ENCODE measurements at regions of chr6 and their contacts with region 1.

Region 1: DNA sequence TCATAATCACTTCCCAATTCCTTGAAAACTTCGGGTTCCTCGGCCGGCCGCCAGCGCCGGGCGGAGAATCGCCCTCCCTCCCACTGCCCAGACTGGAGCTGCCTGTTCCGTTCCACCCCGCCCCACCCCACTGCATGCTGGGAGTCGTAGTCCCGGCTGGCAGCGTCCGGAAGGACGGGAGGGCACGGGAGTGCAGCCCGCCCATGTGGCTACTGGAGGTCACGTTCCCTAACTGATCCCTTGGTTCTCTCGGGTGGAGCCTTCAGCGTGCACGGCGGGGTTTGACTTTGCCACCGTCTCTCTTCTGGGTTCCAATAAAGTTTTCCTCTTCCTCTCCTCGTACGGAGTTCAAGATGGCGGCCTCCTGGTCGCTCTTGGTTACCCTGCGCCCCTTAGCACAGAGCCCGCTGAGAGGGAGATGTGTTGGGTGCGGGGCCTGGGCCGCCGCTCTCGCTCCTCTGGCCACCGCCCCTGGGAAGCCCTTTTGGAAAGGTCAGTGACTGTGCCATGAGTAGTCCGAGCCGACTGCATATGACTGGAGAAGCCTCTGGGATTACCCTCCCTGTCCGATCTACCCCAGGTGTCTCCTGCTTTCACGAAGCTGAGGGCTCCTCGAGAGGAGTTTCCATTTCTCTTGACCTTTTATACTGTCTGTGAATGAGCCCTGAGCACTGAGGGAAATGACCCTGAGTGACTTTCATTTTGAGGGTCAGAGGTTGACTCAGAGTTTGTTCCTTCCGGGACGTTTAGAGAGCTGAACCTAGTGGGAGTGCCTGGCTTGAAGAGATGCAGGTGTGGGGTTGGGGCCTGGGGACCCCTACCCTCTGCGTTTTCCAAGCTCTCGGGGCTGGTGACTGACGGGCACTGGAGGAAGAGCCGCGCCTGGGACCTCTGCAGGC is at the start of gene AFG1L:
- DNase-seq: peak; percentile 93
- H3K4me3 Mint-ChIP-seq: peak within 1 kb of the TSS; percentile 94
- H3K27ac Mint-ChIP-seq: peak within 1 kb of the TSS; percentile 99
- H3K4me1 Mint-ChIP-seq: peaks cover 10% of the 10 kb centered on the region
- H3K27me3 Mint-ChIP-seq: no peaks in the 10 kb centered on the region
- CTCF ChIP-seq: no peak
- total RNA-seq, gene AFG1L: 8.2 and 8.5 TPM in 2 replicates

Region 2: GRCh38 chr6:108260809-108261569 is 34.0 kb before region 1 on chr6 and contains the start of gene SNX3:
- CTCF ChIA-PET with region 1: interaction called, 6 read pairs
- POLR2A ChIA-PET with region 1: interaction called, 80 read pairs
- intact Hi-C with region 1: loop called (anchors 1 kb)
- DNase-seq: peak; percentile 96
- H3K4me3 Mint-ChIP-seq: peak within 1 kb of the TSS; percentile 93
- H3K27ac Mint-ChIP-seq: peak within 1 kb of the TSS; percentile 89
- H3K4me1 Mint-ChIP-seq: peaks cover 7% of the 10 kb centered on the region
- H3K27me3 Mint-ChIP-seq: no peaks in the 10 kb centered on the region
- CTCF ChIP-seq: no peak
- total RNA-seq, gene SNX3: 114 and 138 TPM in 2 replicates

Region 3: GRCh38 chr6:108309844-108310243 is 14.9 kb after region 1 on chr6:
- CTCF ChIA-PET with region 1: interaction called, 4 read pairs
- POLR2A ChIA-PET with region 1: interaction called, 30 read pairs
- intact Hi-C with region 1: no loop called
- DNase-seq: no peak
- H3K4me3 Mint-ChIP-seq: no peak overlapping the region
- H3K27ac Mint-ChIP-seq: no peak overlapping the region
- H3K4me1 Mint-ChIP-seq: peaks cover 6% of the 10 kb centered on the region
- H3K27me3 Mint-ChIP-seq: no peaks in the 10 kb centered on the region
- CTCF ChIP-seq: no peak

Region 4: GRCh38 chr6:108363889-108364313 is 68.9 kb after region 1 on chr6:
- CTCF ChIA-PET with region 1: interaction called, 4 read pairs
- POLR2A ChIA-PET with region 1: interaction called, 12 read pairs
- intact Hi-C with region 1: no loop called
- DNase-seq: peak; percentile 17
- H3K4me3 Mint-ChIP-seq: peak overlapping the region; percentile 17
- H3K27ac Mint-ChIP-seq: no peak overlapping the region
- H3K4me1 Mint-ChIP-seq: peaks cover 5% of the 10 kb centered on the region
- H3K27me3 Mint-ChIP-seq: no peaks in the 10 kb centered on the region
- CTCF ChIP-seq: no peak